H1 (cell line): ENCODE measurements at regions of chr17 and their contacts with region 1.

Region 1: GRCh38 chr17:1908699-1909309 is 79.0 kb downstream of the RPA1 start:
- DNase-seq: no peak
- H3K4me3 ChIP-seq: peak overlapping the region in 3 of 4 experiments; percentile 17 to 48 (median 34); a peak in 3 of 8 replicates
- H3K27ac ChIP-seq: no peak overlapping the region
- H3K4me1 ChIP-seq: peaks cover 0 to 4% (median 3%) of the 10 kb centered on the region in 4 experiments; a peak in 3 of 7 replicates
- H3K27me3 ChIP-seq: peaks cover 40 to 85% (median 71%) of the 10 kb centered on the region in 4 experiments
- CTCF ChIP-seq: peak; percentile 64 to 88 (median 74)
- EP300 ChIP-seq: no peak
- POLR2A ChIP-seq: no peak
- RAD21 ChIP-seq: peak; percentile 87 to 89

Region 2: DNA sequence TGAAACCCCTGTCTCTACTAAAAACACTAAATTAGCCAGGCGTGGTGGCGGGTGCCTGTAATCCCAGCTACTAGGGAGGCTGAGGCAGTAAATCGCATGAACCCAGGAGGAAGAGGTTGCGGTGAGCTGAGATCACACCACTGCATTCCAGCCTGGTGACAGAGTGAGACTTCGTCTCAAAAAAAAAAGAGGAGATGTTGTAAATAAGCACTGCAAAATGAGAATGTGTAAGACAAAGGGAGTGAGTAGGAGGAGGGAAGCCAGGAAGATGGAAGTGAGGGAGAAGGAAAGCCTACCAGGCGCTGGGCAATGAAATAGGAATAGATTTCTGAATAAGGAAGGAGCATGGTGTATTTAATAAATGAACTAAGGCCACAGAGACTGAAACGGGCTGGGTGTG is 215.5 kb before region 1 on chr17:
- CTCF ChIA-PET with region 1: no interaction called
- POLR2A ChIA-PET with region 1: no interaction called
- DNase-seq: no peak
- H3K4me3 ChIP-seq: no peak overlapping the region
- H3K27ac ChIP-seq: no peak overlapping the region
- H3K4me1 ChIP-seq: no peaks in the 10 kb centered on the region
- H3K27me3 ChIP-seq: no peaks in the 10 kb centered on the region
- CTCF ChIP-seq: no peak
- EP300 ChIP-seq: no peak
- POLR2A ChIP-seq: no peak
- RAD21 ChIP-seq: no peak

Region 3: GRCh38 chr17:1882836-1883235 is 26.0 kb before region 1 on chr17:
- CTCF ChIA-PET with region 1: interaction called, 15 read pairs
- POLR2A ChIA-PET with region 1: no interaction called
- DNase-seq: peak in 1 of 2 experiments; percentile 58
- H3K4me3 ChIP-seq: no peak overlapping the region
- H3K27ac ChIP-seq: no peak overlapping the region
- H3K4me1 ChIP-seq: no peaks in the 10 kb centered on the region
- H3K27me3 ChIP-seq: no peaks in the 10 kb centered on the region
- CTCF ChIP-seq: peak in 2 of 3 experiments; percentile 57 to 62; a peak in 3 of 4 replicates
- EP300 ChIP-seq: no peak
- POLR2A ChIP-seq: no peak
- RAD21 ChIP-seq: peak; percentile 54 to 64

Region 4: GRCh38 chr17:1920948-1921351 is 12.1 kb after region 1 on chr17:
- CTCF ChIA-PET with region 1: interaction called, 20 read pairs
- POLR2A ChIA-PET with region 1: no interaction called
- DNase-seq: no peak
- H3K4me3 ChIP-seq: no peak overlapping the region
- H3K27ac ChIP-seq: no peak overlapping the region
- H3K4me1 ChIP-seq: no peaks in the 10 kb centered on the region
- H3K27me3 ChIP-seq: no peaks in the 10 kb centered on the region; a peak in 2 of 7 replicates
- CTCF ChIP-seq: no peak
- EP300 ChIP-seq: no peak
- POLR2A ChIP-seq: no peak
- RAD21 ChIP-seq: no peak

Region 5: DNA sequence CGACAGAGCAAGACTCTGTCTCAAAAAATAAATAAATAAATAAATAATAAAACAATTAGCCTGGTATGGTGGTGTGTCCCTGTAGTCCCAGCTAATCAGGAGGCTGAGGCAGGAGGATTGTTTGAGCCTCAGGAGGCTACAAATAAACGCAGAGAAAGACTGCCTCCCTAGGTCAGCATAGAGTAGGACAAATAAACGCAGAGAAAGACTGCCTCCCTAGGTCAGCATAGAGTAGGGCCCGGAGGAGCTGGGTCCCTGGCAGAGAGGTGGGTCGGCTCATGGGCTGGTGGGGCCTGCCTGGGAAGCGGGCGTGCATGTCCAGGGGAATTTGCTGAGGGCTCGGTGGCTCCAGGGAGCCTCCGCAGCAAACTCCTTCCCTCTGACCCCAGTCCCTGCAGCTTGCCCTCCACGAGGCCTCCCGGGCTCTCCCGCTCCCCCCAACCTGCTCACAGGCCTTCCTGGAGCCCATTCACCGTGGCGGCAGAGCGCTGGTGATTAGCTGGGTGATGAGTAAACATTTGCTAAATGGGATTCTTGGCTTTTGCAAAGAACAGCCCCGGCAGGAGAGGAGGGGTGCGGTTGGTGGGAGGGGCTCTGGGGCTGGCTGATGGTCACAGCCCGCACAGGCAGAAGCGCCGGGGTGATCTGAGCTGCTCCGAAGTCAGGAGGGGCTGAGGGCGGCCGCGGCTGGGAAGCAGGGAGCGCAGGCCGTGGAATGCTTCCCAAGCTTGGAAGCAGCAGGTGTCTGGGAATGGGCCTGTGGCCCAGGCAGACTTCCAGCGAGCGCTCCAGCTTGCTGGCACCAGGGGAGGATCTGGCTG is 23.2 kb after region 1 on chr17:
- CTCF ChIA-PET with region 1: interaction called, 18 read pairs
- POLR2A ChIA-PET with region 1: no interaction called
- DNase-seq: peak in 1 of 2 experiments; percentile 73
- H3K4me3 ChIP-seq: peak overlapping the region in 1 of 4 experiments; percentile 47; a peak in 2 of 8 replicates
- H3K27ac ChIP-seq: no peak overlapping the region
- H3K4me1 ChIP-seq: peaks cover 0 to 3% (median 1%) of the 10 kb centered on the region in 4 experiments; a peak in 3 of 7 replicates
- H3K27me3 ChIP-seq: peaks cover 0 to 6% (median 3%) of the 10 kb centered on the region in 4 experiments; a peak in 4 of 7 replicates
- CTCF ChIP-seq: peak in 2 of 3 experiments; percentile 40 to 71; a peak in 3 of 4 replicates
- EP300 ChIP-seq: no peak
- POLR2A ChIP-seq: no peak
- RAD21 ChIP-seq: peak in 1 of 2 experiments; percentile 39; a peak in 2 of 4 replicates

Region 6: DNA sequence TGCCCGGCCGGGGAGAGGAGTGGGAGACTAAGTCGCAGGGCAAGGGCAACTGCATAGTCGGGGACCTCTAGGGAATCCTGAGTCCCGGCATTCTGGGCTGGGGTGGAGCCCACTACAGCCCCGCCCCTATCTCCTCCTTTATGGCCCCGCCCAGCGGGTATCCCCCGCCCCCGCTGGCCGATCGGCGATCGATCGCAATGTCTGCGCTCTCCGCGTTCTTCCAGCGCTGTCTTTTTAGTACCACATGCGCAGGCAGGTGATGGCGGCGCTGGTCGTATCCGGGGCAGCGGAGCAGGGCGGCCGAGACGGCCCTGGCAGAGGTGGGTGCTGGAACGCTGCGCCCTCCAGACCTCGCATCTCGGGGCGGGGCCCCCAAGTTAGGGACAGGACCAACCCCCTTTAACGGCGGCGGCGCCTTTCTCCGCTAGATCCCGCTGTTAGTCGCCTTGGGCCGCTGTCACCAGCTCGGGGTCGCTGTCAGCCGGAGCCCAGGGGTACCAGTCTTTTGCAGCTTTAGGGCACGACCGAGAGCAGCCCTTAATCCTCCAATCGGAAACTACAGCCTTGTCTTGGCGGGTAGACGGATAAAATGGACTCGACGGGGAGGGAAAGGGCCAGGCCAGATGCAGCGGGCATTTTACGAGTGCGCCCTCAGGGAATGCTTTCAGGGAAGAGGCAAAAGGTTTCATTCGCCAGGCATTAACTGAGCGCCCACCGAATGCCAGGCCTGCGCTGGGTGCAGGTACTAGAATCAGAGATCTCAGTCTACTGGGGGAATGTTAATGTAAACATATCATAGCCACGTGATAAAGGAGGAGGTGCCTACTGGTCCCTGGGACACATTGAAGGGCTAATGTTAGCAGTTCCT is 121.3 kb after region 1 on chr17 and contains the start of gene DPH1:
- CTCF ChIA-PET with region 1: interaction called, 47 read pairs
- POLR2A ChIA-PET with region 1: no interaction called
- DNase-seq: peak; percentile 69 to 97
- H3K4me3 ChIP-seq: peak within 1 kb of the TSS; percentile 74 to 98 (median 92)
- H3K27ac ChIP-seq: no peak within 1 kb of the TSS
- H3K4me1 ChIP-seq: peaks cover 2 to 7% (median 4%) of the 10 kb centered on the region in 4 experiments; a peak in 5 of 7 replicates
- H3K27me3 ChIP-seq: peaks cover 44 to 47% (median 46%) of the 10 kb centered on the region in 4 experiments
- CTCF ChIP-seq: no peak
- EP300 ChIP-seq: peak in 1 of 2 experiments; percentile 46; a peak in 1 of 3 replicates
- POLR2A ChIP-seq: no peak
- RAD21 ChIP-seq: 0 out of 4 replicates have a peak, but pooled peaks of 1 of the 2 experiments have one; percentile 14
- total RNA-seq, gene DPH1: 24.9 and 27.1 TPM in 2 replicates

Region 7: GRCh38 chr17:2041561-2042366 is 133.0 kb after region 1 on chr17 and contains the start of gene OVCA2:
- CTCF ChIA-PET with region 1: interaction called, 17 read pairs
- POLR2A ChIA-PET with region 1: interaction called, 3 read pairs
- DNase-seq: peak in 1 of 2 experiments; percentile 96
- H3K4me3 ChIP-seq: peak within 1 kb of the TSS; percentile 58 to 82 (median 71)
- H3K27ac ChIP-seq: peak within 1 kb of the TSS; percentile 74
- H3K4me1 ChIP-seq: peaks cover 0 to 6% (median 5%) of the 10 kb centered on the region in 4 experiments; a peak in 4 of 7 replicates
- H3K27me3 ChIP-seq: peaks cover 0 to 2% (median 0%) of the 10 kb centered on the region in 4 experiments; a peak in 1 of 7 replicates
- CTCF ChIP-seq: peak; percentile 54 to 66 (median 54)
- EP300 ChIP-seq: no peak
- POLR2A ChIP-seq: peak in 1 of 2 experiments; percentile 85; a peak in 2 of 3 replicates
- RAD21 ChIP-seq: peak; percentile 58 to 75
- total RNA-seq, gene OVCA2: 14.9 and 15.3 TPM in 2 replicates